AG04450 (cell line): ENCODE measurements at regions of chr6 and their contacts with region 1.

Region 1: GRCh38 chr6:38508894-38509293 is 130.8 kb downstream of the BTBD9 start:
- DNase-seq: peak; percentile 37
- H3K4me3 ChIP-seq: no peak overlapping the region
- H3K27ac ChIP-seq: no peak overlapping the region
- H3K27me3 ChIP-seq: no peaks in the 10 kb centered on the region
- CTCF ChIP-seq: no peak

Region 2: GRCh38 chr6:38564301-38564700 is 55.4 kb after region 1 on chr6:
- CTCF ChIA-PET with region 1: interaction called, 11 read pairs
- POLR2A ChIA-PET with region 1: no interaction called
- DNase-seq: no peak
- H3K4me3 ChIP-seq: no peak overlapping the region
- H3K27ac ChIP-seq: no peak overlapping the region
- H3K27me3 ChIP-seq: no peaks in the 10 kb centered on the region
- CTCF ChIP-seq: no peak